Transverse colon (tissue), 4 donors: ENCODE measurements at regions of chr19 and their contacts with region 1.

Region 1: GRCh38 chr19:49808711-49809159 is 4.4 kb downstream of the FUZ start:
- DNase-seq: peak; percentile 95
- H3K4me3 ChIP-seq: peak overlapping the region; percentile 38 to 57 (median 46)
- H3K27ac ChIP-seq: peak overlapping the region; percentile 62 to 84 (median 78)
- H3K4me1 ChIP-seq: peaks cover 4 to 29% (median 14%) of the 10 kb centered on the region in 4 donors
- H3K27me3 ChIP-seq: no peaks in the 10 kb centered on the region
- CTCF ChIP-seq: no peak
- EP300 ChIP-seq: no peak
- POLR2A ChIP-seq: peak; percentile 27

Region 2: DNA sequence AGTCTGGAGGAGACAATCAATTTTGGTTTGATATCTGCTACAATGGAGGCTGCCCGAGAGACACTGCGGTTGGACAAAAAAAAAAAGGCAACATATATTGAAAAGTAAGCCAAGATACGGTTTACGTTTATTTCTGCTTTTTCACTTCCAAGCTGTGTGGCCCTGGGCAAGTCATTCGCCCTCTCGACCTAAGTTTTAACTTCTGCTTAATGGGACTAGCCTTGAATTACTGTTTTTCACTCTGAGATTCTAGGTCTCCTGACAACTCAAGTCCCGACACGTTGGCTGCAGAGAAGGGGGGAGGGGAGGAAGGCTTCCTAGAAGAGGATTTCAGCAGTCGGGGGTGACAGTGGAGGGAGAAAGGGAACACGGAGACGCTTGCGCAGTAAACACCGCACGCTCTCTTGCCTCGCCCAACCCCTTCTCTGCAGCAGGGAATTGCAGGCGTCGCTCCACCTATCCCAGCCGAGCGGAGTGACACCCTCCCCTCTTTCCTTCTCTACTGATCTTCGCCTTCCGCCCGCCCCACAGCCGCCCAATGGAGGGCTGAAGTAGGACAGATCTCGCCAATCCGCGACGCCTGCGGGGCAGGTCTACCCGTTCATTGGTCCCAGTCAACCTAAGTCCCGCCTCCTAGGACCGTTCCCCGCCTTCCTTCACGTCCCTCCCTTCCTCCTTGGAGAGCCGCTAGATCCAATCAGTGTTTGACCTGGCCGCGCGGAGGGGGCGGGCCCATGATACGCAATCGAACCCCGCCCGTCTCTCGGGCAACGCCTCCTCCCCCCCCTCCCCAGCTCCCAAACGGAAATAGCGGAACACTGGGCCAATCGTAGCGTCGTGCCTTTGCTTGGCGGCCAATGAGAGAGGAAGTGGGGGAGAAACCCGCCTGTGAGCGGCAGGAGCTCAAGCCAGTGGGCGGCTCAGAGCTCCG is 42.5 kb before region 1 on chr19:
- in situ Hi-C with region 1: no loop called
- intact Hi-C with region 1: loop called (anchors 5 kb)
- DNase-seq: peak; percentile 99
- H3K4me3 ChIP-seq: peak overlapping the region; percentile 22 to 92 (median 84)
- H3K27ac ChIP-seq: peak overlapping the region; percentile 87 to 96 (median 94)
- H3K4me1 ChIP-seq: peaks cover 13 to 27% (median 22%) of the 10 kb centered on the region in 4 donors
- H3K27me3 ChIP-seq: no peaks in the 10 kb centered on the region
- CTCF ChIP-seq: no peak
- EP300 ChIP-seq: no peak
- POLR2A ChIP-seq: peak; percentile 73